ENCODE measurements at regions of chr6 and their contacts with region 1.

Region 1: DNA sequence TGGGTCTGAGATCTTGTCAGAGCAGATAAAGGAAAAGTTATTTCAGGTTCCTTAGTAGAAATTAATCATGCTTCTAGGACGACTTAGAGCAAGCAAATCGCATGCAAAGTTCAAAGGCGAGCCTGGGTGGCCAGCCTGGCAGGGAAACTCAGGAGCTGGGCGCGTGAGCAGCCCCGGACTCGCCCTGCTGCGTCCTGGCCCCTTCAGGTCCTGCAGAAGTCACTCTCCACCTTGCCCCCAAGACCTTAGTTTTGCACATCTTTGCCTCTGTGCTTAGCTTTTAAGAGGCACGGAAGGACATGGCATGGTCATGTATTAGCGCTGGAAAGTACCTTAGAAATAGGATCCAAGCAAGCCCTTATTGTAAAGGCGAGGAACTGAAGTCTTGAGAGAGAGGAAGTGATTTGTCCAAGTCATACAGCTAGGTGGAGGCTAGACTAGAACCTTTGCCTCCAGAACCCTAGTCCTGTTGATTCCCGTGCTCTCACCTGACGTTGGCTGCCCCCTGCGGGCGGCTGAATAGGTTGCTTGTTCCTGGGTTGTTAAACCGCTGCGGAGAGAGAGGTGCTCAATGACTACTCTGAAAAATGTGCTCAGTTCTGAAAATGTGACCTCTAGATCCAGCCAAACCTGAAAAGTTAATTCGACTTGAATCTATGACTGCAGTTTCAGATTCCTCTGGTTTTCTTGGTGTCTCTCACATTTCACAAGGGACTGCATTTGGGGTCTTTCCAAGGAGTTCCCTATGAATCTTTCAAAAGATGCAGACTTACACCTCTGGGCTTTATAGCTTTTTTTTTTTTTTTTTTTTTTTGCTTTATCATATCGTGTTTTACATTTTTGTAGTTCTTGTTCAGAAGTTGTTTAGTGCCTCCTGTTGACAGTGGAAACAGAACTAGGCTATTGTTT is 2.7 kb downstream of the MYB start:
- DNase-seq: peak; percentile 51 to 69 (median 68)
- H3K4me3 ChIP-seq: peak overlapping the region; percentile 78 to 93 (median 84)
- H3K4me3 Mint-ChIP-seq: peak overlapping the region; percentile 95 to 98
- H3K27ac ChIP-seq: peak overlapping the region; percentile 27 to 73
- H3K27ac Mint-ChIP-seq: peak overlapping the region; percentile 71 to 89 (median 86)
- H3K4me1 ChIP-seq: peaks cover 33 to 41% of the 10 kb centered on the region in 2 donors
- H3K4me1 Mint-ChIP-seq: peaks cover 47% of the 10 kb centered on the region
- H3K27me3 ChIP-seq: no peaks in the 10 kb centered on the region
- H3K27me3 Mint-ChIP-seq: no peaks in the 10 kb centered on the region
- CTCF ChIP-seq: peak; percentile 70

Region 2: DNA sequence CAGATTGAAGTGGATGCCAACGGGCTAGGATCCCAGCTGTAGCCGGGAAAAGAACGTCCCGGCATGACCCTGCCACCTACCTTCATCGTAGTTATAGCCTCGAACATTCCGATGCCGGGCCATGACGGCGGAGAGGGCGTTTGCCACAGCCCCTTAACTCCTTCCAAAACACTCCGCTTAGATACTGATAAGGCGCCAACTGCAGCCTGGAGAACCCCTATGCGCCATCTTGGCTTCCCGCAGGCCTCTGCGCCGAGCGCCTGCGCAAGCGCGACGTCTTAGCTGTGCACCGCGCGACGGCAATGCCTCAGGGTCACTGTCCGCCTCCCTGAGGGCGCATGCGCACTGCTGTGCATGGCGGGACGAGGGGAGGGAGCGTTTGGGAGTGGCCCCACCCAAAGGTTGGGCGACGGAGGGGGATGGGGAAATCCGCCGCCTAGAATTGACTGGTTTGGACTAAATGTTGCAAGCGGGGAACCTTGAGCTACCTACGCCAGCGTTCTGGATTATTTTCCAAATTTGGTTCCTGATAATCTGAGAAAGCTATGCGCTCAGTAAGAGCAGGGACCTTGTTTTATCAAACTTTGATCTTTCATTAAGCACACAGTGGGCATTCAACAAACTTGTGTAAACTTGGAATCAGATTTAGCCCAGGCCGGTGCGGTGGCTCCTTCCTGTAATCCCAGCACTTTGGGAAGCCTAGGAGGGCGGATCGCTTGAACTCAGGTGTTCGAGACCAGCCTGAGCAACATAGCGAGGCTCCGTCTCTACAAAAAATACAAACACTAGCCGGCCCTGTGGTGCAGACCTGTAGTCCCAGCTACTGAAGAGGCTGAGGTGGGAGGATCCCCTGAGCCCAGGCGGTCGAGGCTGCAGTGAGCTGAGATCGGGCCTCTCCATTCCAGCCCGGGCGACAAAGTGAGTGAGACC is 129.0 kb before region 1 on chr6 and contains the start of gene HBS1L:
- intact Hi-C with region 1: loop called in 1 of 2 experiments (anchors 10 kb)
- DNase-seq: peak; percentile 97 to 99 (median 98)
- H3K4me3 ChIP-seq: peak within 1 kb of the TSS; percentile 89 to 99 (median 99)
- H3K4me3 Mint-ChIP-seq: peak within 1 kb of the TSS; percentile 90 to 97
- H3K27ac ChIP-seq: peak within 1 kb of the TSS; percentile 97 to 98
- H3K27ac Mint-ChIP-seq: peak within 1 kb of the TSS; percentile 96 to 98 (median 98)
- H3K4me1 ChIP-seq: peaks cover 21 to 30% of the 10 kb centered on the region in 2 donors
- H3K4me1 Mint-ChIP-seq: peaks cover 28% of the 10 kb centered on the region
- H3K27me3 ChIP-seq: no peaks in the 10 kb centered on the region
- H3K27me3 Mint-ChIP-seq: peaks cover 0 to 2% (median 0%) of the 10 kb centered on the region in 3 donors
- CTCF ChIP-seq: no peak
- polyA plus RNA-seq, gene HBS1L: 16.0 to 48.9 (median 36.3) TPM

Region 3: GRCh38 chr6:135196739-135197510 is 13.1 kb after region 1 on chr6:
- intact Hi-C with region 1: loop called in 1 of 2 experiments (anchors 2 kb)
- DNase-seq: no peak
- H3K4me3 ChIP-seq: peak overlapping the region in 1 of 3 experiments; percentile 79
- H3K4me3 Mint-ChIP-seq: peak overlapping the region; percentile 7 to 78
- H3K27ac ChIP-seq: peak overlapping the region; percentile 29 to 72
- H3K27ac Mint-ChIP-seq: peak overlapping the region; percentile 25 to 88 (median 64)
- H3K4me1 ChIP-seq: peaks cover 57 to 72% of the 10 kb centered on the region in 2 donors
- H3K4me1 Mint-ChIP-seq: peaks cover 64% of the 10 kb centered on the region
- H3K27me3 ChIP-seq: no peaks in the 10 kb centered on the region
- H3K27me3 Mint-ChIP-seq: no peaks in the 10 kb centered on the region
- CTCF ChIP-seq: no peak

Region 4: DNA sequence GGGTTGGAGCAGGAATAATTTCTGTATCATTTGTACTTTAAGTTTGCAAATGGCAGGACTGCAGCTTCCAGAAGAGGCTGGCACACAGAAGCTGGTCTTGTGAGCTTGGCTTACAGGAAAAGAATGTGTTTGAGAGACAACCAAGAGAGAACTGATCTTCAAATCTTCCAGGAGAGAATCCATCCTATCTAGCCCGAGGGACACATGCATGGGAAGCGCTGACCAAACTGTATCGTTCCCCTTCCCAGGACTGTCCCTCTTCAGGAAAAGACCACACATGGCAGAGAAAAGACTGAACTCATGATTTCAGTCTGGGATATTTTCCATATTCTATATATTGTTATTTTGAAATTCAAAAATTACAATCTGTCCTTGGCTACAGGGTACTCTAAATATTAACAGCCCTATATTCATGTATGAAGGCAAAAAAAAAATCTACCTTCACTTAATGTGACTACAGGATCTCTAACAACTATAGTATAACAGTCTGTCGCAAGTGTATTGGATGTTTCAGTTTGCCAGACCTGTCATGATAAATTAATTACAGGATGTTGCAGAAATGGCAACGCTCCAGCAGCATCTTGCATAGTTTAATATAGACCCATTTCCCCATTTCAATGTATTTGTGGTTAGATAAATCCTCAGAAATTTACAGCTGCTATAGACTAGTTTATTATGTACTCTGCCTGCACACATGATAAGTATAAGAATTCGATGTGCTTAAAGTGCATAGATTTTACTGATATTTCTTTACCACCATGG is 96.8 kb after region 1 on chr6:
- intact Hi-C with region 1: loop called in 1 of 2 experiments (anchors 10 kb)
- DNase-seq: peak; percentile 54 to 81 (median 64)
- H3K4me3 ChIP-seq: peak overlapping the region; percentile 14 to 67 (median 31)
- H3K4me3 Mint-ChIP-seq: peak overlapping the region; percentile 16 to 75
- H3K27ac ChIP-seq: peak overlapping the region; percentile 29 to 77
- H3K27ac Mint-ChIP-seq: peak overlapping the region; percentile 68 to 91 (median 81)
- H3K4me1 ChIP-seq: peaks cover 27 to 36% of the 10 kb centered on the region in 2 donors
- H3K4me1 Mint-ChIP-seq: peaks cover 39% of the 10 kb centered on the region
- H3K27me3 ChIP-seq: no peaks in the 10 kb centered on the region
- H3K27me3 Mint-ChIP-seq: no peaks in the 10 kb centered on the region
- CTCF ChIP-seq: no peak

Region 5: DNA sequence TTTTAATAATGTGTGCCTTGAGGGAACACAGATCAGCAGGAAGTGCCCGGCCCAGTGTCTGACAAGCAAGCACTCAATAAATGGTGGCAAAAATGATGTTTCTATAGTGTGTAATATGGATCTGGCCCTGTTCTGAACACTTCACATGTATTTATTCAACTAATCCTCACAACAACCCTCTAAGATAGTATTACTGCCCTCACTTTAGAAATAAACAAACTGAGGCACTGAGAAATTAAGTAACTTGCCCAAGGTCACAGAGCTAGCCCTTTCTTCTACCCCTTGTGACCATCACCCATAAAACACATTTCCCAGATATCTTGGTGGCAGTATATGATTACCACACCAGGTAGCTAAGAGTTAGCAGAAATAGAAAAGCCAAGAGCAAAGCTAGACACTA is 1079.2 kb after region 1 on chr6:
- intact Hi-C with region 1: loop called in 1 of 2 experiments (anchors 10 kb)
- DNase-seq: no peak
- H3K4me3 ChIP-seq: no peak overlapping the region
- H3K4me3 Mint-ChIP-seq: no peak overlapping the region
- H3K27ac ChIP-seq: peak overlapping the region in 1 of 2 donors; percentile 6
- H3K27ac Mint-ChIP-seq: peak overlapping the region in 2 of 7 donors; percentile 10 to 43
- H3K4me1 ChIP-seq: no peaks in the 10 kb centered on the region
- H3K4me1 Mint-ChIP-seq: peaks cover 2% of the 10 kb centered on the region
- H3K27me3 ChIP-seq: no peaks in the 10 kb centered on the region
- H3K27me3 Mint-ChIP-seq: no peaks in the 10 kb centered on the region
- CTCF ChIP-seq: no peak